ENCODE measurements at regions of chr15 and their contacts with region 1.

Region 1: DNA sequence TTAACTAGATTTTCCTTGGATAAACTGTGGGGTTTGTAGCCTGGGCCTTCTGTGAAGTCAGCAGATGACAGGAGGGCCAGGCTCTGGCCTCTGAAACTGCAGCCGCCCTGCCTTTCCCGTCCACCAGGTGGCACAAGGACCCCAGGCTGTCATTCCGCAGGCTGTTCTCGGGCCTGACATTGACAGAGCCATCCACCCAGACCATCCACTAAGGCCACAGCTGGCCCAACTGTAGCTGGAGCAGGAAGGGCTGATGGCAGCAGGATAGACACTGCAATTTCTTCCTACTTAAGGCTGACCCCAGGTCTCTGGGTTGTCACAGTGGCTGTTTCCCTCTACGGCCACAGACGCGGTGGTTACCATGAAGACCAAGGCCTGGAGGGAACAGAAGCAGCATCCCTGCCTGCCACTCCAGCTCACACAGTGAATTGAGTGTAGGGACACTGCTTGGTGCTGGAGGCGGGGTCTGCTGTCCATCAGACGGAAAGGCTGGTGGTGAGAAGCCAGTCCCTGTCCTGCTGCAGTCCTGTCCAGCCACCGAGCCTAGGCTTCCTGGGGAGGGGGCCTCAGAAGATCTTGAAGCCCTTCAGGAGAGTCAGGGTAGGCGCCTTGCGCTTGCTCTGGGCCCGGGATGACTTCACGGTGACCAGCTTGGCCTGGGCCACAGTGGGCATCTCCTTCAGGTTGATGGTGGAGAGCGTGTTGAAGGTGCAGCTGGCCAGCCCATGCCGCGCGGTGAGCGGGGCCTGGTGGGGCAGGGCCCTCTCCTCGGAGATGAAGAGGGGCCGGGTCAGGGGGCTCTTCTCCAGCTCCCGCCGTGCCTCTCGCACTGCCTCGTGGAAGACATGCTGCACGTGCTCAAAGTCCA is 9.4 kb downstream of the SLC51B start:
- DNase-seq: peak; percentile 82
- CTCF ChIP-seq: peak; percentile 90

Region 2: DNA sequence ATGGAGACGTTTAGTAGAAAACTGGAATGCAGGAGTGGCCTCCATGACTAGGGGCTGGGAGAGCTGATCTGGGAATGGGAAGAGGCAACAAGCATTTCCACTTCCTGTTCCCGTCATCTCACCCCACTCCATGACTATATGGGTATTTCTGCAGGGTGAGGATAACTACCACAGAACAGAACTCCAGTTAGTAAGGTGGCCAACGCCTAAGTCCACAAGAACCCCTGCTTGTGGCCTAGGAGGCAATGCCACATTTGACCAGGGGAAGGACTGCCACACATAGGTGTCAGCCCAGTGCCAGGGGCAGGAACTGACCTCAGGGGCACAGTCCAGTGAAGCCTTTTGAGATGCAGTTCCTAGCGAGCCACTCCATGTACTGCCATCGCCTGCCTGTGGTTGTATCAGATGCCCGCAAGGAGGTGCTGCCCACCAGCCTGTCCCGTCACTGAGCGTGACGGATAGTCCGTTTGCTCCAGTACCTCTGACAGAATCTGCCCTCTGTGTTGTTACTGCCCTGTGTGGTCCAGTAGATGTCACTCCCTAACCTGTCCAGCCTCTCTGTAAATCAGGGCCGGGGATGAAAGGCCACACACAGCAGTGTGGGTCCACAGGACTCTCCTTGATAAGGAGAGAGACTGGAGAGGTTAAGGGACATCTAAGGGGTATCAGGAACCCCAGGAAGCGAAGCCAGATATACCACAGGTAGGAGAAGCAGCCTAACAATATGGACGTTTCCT is 21.6 kb before region 1 on chr15:
- CTCF ChIA-PET with region 1: interaction called, 11 read pairs
- POLR2A ChIA-PET with region 1: no interaction called
- DNase-seq: no peak
- CTCF ChIP-seq: peak; percentile 50

Region 3: DNA sequence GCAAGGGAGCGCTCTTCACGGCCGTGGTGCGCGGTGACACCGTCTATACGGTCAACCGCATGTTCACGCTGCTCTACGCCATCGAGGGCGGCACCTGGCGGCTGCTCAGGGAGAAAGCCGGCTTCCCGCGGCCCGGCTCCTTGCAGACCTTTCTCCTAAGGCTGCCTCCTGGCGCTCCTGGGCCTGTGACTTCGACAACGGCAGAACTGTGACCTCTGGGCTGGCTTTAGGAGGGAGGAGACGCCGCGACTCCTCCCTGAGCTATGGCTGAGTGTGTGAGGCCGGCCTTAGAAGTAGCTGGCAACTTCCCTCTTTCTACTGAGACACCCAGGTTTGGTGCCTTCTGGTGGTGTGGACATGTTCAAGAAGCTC is 23.4 kb after region 1 on chr15:
- CTCF ChIA-PET with region 1: interaction called, 72 read pairs
- POLR2A ChIA-PET with region 1: no interaction called
- DNase-seq: peak; percentile 70
- CTCF ChIP-seq: peak; percentile 48

Region 4: DNA sequence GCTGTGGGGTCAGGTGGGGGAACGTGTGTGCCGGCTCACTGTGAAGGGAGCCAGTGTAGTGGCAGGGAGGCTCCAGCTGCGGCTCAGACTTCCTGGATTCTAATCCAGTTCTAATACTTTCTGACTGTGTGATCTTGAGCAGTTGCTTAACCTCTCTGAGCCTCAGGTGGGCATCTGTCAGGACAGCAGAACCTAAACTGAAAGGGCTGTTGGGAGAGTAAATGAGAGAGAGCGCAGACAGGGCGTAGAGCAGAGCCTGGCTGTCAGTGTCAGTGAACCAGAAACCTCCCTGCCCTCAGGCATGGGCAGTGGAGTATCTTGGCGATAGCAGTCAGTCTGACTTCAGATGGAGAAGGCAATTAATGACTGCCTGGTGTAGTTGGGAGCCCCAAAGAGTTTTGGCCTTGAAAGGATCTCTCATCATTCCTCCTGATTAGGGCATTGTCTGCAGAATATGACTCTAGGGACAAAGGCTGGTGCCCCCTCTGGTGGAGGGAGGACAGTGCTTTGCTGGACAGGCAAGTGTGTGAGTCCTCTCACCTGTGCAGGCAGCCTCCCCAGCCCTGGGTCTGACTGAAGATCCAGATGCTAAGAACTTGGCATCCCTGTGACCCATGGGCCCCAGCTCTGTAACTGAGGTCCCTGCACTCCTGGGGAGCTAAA is 31.6 kb after region 1 on chr15:
- CTCF ChIA-PET with region 1: interaction called, 17 read pairs
- POLR2A ChIA-PET with region 1: no interaction called
- DNase-seq: peak; percentile 53
- CTCF ChIP-seq: peak; percentile 58

Region 5: GRCh38 chr15:65101411-65101890 is 46.9 kb after region 1 on chr15:
- CTCF ChIA-PET with region 1: interaction called, 35 read pairs
- POLR2A ChIA-PET with region 1: no interaction called
- DNase-seq: peak; percentile 69
- CTCF ChIP-seq: peak; percentile 46

Measured in GM10248 (cell line).